ENCODE measurements at regions of chr5 and their contacts with region 1.

Region 1: DNA sequence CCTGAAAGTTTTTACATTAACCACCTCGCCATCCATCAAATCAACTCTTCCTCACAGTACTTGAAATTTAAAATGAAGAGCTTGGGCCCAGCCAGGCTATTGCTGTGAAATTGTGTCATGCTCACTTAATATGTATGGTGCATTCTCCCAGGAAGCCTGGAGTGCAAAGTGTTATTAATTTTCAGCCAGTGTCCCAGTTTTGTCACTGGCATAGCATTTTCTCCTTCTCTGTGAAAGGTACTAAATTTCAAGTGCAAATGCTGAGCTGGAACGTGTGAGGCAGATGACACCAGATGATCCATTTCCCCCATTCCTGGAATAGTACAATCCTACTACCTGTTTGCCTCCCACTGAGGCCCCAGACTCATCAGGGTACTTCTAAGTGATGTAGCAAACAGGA is 397.6 kb upstream of the ACTBL2 start:
- DNase-seq: no peak
- ATAC-seq: no peak

Region 2: GRCh38 chr5:57779383-57780223 is 100.6 kb before region 1 on chr5:
- intact Hi-C with region 1: loop called (anchors 5 kb)
- DNase-seq: no peak
- ATAC-seq: peak; percentile 87

Measured in Right ventricle myocardium superior (tissue), 1 donor.